IMR-90 (cell line): ENCODE measurements at regions of chr22 and their contacts with region 1.

Region 1: GRCh38 chr22:27885977-27886842 is 32.8 kb downstream of the PITPNB start:
- DNase-seq: peak; percentile 98
- ATAC-seq: peak; percentile 79
- H3K4me3 ChIP-seq: no peak overlapping the region
- H3K27ac ChIP-seq: peak overlapping the region; percentile 97
- H3K4me1 ChIP-seq: peaks cover 38% of the 10 kb centered on the region
- H3K27me3 ChIP-seq: no peaks in the 10 kb centered on the region
- CTCF ChIP-seq: peak; percentile 74
- POLR2A ChIP-seq: no peak
- RAD21 ChIP-seq: peak; percentile 60

Region 2: GRCh38 chr22:27913162-27913741 is 27.0 kb after region 1 on chr22:
- CTCF ChIA-PET with region 1: interaction called, 9 read pairs
- POLR2A ChIA-PET with region 1: interaction called, 24 read pairs
- dilution Hi-C with region 1: no loop called
- in situ Hi-C with region 1: no loop called
- intact Hi-C with region 1: no loop called
- DNase-seq: peak; percentile 29
- ATAC-seq: peak; percentile 47
- H3K4me3 ChIP-seq: no peak overlapping the region
- H3K27ac ChIP-seq: peak overlapping the region; percentile 51; the same call in 1 of the 2 replicates
- H3K4me1 ChIP-seq: peaks cover 10% of the 10 kb centered on the region
- H3K27me3 ChIP-seq: no peaks in the 10 kb centered on the region
- CTCF ChIP-seq: no peak
- POLR2A ChIP-seq: no peak
- RAD21 ChIP-seq: no peak

Region 3: DNA sequence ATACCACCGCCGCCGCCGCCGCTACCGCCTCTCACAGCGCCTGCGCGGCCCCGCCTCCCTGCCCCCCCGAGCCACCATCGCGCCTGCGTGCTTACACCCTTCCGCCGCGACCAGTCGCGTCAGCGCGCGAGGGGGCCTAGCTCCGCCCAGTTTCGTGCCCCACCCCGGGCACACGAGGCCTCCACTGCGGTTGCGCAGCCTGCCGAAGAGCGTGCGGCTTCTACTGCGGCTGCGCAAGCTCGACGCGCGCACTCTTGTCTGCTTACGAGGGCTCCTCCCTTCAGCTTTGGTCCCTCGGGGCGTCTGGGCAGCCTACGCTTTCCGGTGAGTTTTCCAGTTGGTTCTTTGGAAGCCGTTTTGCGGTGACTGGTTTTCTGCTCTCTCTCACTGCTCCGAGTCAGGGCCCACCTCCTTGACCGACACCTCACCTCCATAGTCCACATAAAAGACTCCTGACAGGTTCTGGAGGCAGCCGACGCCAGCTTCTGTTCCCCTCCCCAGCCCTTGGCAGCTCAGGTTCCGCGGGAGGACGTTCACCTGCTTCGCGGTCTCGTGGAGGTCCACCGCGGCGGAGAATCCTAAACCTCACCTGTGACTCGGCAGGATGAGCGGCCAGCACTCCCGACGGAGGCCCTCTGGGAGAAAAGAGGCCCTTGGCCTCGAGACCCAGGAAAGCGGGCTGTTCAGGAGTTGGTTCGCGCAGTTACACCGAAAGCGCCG is 33.2 kb after region 1 on chr22 and contains the start of gene PITPNB:
- CTCF ChIA-PET with region 1: interaction called, 5 read pairs
- POLR2A ChIA-PET with region 1: no interaction called
- dilution Hi-C with region 1: no loop called
- in situ Hi-C with region 1: no loop called
- intact Hi-C with region 1: loop called (anchors 1 kb)
- DNase-seq: peak; percentile 97
- ATAC-seq: peak; percentile 91
- H3K4me3 ChIP-seq: peak within 1 kb of the TSS; percentile 84
- H3K27ac ChIP-seq: peak within 1 kb of the TSS; percentile 92
- H3K4me1 ChIP-seq: peaks cover 5% of the 10 kb centered on the region
- H3K27me3 ChIP-seq: no peaks in the 10 kb centered on the region
- CTCF ChIP-seq: no peak
- POLR2A ChIP-seq: peak; percentile 87
- RAD21 ChIP-seq: no peak
- total RNA-seq, gene PITPNB: 19.7 and 29.2 TPM in 2 replicates

Region 4: DNA sequence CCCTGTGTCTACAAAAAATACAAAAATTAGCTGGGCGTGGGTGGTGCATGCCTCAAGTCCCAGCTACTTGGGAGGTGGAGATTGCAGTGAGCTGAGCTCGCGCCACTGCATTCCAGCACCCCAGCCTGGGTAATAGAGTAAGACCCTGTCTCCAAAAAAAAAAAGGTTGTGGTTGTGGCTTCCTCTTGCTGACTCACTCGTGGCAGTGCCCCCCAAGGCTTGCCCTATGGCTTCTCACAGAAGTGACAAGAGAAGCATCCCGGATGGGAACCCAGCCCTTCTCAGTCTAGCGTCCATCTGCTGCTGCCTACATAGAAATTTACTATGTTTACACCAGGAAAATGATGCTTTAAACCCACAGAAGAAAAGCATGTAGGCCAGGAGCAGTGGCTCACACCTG is 101.3 kb after region 1 on chr22:
- CTCF ChIA-PET with region 1: no interaction called
- POLR2A ChIA-PET with region 1: no interaction called
- dilution Hi-C with region 1: no loop called
- in situ Hi-C with region 1: no loop called
- intact Hi-C with region 1: loop called (anchors 1 kb)
- DNase-seq: peak; percentile 93
- ATAC-seq: peak; percentile 88
- H3K4me3 ChIP-seq: no peak overlapping the region
- H3K27ac ChIP-seq: no peak overlapping the region; the same call in 1 of the 2 replicates
- H3K4me1 ChIP-seq: peaks cover 13% of the 10 kb centered on the region
- H3K27me3 ChIP-seq: no peaks in the 10 kb centered on the region
- CTCF ChIP-seq: no peak
- POLR2A ChIP-seq: no peak
- RAD21 ChIP-seq: no peak